CD8-positive, alpha-beta memory T cell (primary cell): ENCODE measurements at regions of chr6 and their contacts with region 1.

Region 1: GRCh38 chr6:159104163-159104925 is 59.6 kb upstream of the TAGAP start:
- DNase-seq: peak; percentile 64 to 86 (median 71)
- H3K4me3 ChIP-seq: peak overlapping the region; percentile 28
- H3K4me3 Mint-ChIP-seq: peak overlapping the region; percentile 33 to 82 (median 71)
- H3K27ac ChIP-seq: no peak overlapping the region
- H3K27ac Mint-ChIP-seq: peak overlapping the region; percentile 53 to 95 (median 90)
- H3K4me1 ChIP-seq: peaks cover 75% of the 10 kb centered on the region
- H3K4me1 Mint-ChIP-seq: peaks cover 67 to 92% (median 88%) of the 10 kb centered on the region in 3 donors
- H3K27me3 ChIP-seq: no peaks in the 10 kb centered on the region
- H3K27me3 Mint-ChIP-seq: no peaks in the 10 kb centered on the region

Region 2: GRCh38 chr6:158999666-159000403 is 104.5 kb before region 1 on chr6 and contains the start of gene RSPH3:
- CTCF ChIA-PET with region 1: interaction called, 248 read pairs
- POLR2A ChIA-PET with region 1: interaction called, 3 read pairs
- DNase-seq: peak; percentile 84 to 91 (median 84)
- H3K4me3 ChIP-seq: peak within 1 kb of the TSS; percentile 95
- H3K4me3 Mint-ChIP-seq: peak within 1 kb of the TSS; percentile 96 to 99 (median 98)
- H3K27ac ChIP-seq: peak within 1 kb of the TSS; percentile 86
- H3K27ac Mint-ChIP-seq: peak within 1 kb of the TSS; percentile 83 to 98 (median 94)
- H3K4me1 ChIP-seq: peaks cover 20% of the 10 kb centered on the region
- H3K4me1 Mint-ChIP-seq: peaks cover 30 to 47% (median 35%) of the 10 kb centered on the region in 3 donors
- H3K27me3 ChIP-seq: no peaks in the 10 kb centered on the region
- H3K27me3 Mint-ChIP-seq: no peaks in the 10 kb centered on the region
- total RNA-seq, gene RSPH3: 4.2 to 4.4 TPM

Region 3: GRCh38 chr6:159042003-159042825 is 62.1 kb before region 1 on chr6:
- CTCF ChIA-PET with region 1: interaction called, 288 read pairs
- POLR2A ChIA-PET with region 1: interaction called, 66 read pairs
- DNase-seq: peak; percentile 56 to 93 (median 86)
- H3K4me3 ChIP-seq: peak overlapping the region; percentile 89
- H3K4me3 Mint-ChIP-seq: peak overlapping the region; percentile 99 to 100 (median 100)
- H3K27ac ChIP-seq: peak overlapping the region; percentile 95
- H3K27ac Mint-ChIP-seq: peak overlapping the region; percentile 90 to 100 (median 98)
- H3K4me1 ChIP-seq: peaks cover 60% of the 10 kb centered on the region
- H3K4me1 Mint-ChIP-seq: peaks cover 60 to 72% (median 69%) of the 10 kb centered on the region in 3 donors
- H3K27me3 ChIP-seq: no peaks in the 10 kb centered on the region
- H3K27me3 Mint-ChIP-seq: peaks cover 0 to 3% of the 10 kb centered on the region in 2 donors

Region 4: DNA sequence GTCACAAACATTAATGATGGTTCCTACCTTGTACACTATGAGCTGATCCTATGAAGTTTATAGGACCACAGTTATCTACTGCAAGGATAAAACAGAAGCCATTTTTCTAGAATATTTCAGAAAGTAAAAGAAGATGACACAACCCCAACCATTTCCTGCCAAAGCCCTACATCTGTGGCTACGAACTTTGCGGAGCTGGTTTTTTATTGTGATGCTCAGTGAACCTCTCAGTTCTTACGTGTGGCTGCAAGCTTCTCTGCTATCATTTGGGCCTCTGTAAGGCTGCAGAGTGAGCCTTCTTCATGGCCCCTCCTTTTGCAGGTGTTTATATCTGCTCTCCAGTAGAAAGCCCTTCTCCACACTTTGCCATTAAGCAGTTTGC is 41.8 kb before region 1 on chr6:
- CTCF ChIA-PET with region 1: interaction called, 54 read pairs
- POLR2A ChIA-PET with region 1: interaction called, 6 read pairs
- DNase-seq: peak; percentile 25 to 83 (median 80)
- H3K4me3 ChIP-seq: peak overlapping the region; percentile 3
- H3K4me3 Mint-ChIP-seq: peak overlapping the region; percentile 43 to 89 (median 75)
- H3K27ac ChIP-seq: peak overlapping the region; percentile 70
- H3K27ac Mint-ChIP-seq: peak overlapping the region; percentile 94 to 99 (median 98)
- H3K4me1 ChIP-seq: peaks cover 69% of the 10 kb centered on the region
- H3K4me1 Mint-ChIP-seq: peaks cover 85 to 98% (median 97%) of the 10 kb centered on the region in 3 donors
- H3K27me3 ChIP-seq: no peaks in the 10 kb centered on the region
- H3K27me3 Mint-ChIP-seq: no peaks in the 10 kb centered on the region

Region 5: GRCh38 chr6:159090530-159091480 is 13.5 kb before region 1 on chr6:
- CTCF ChIA-PET with region 1: interaction called, 18 read pairs
- POLR2A ChIA-PET with region 1: interaction called, 3 read pairs
- DNase-seq: no peak
- H3K4me3 ChIP-seq: no peak overlapping the region
- H3K4me3 Mint-ChIP-seq: no peak overlapping the region
- H3K27ac ChIP-seq: no peak overlapping the region
- H3K27ac Mint-ChIP-seq: peak overlapping the region in 2 of 8 donors; percentile 2 to 59
- H3K4me1 ChIP-seq: peaks cover 21% of the 10 kb centered on the region
- H3K4me1 Mint-ChIP-seq: peaks cover 13 to 25% (median 22%) of the 10 kb centered on the region in 3 donors
- H3K27me3 ChIP-seq: no peaks in the 10 kb centered on the region
- H3K27me3 Mint-ChIP-seq: no peaks in the 10 kb centered on the region

Region 6: GRCh38 chr6:159134701-159135364 is 30.5 kb after region 1 on chr6:
- CTCF ChIA-PET with region 1: interaction called, 69 read pairs
- POLR2A ChIA-PET with region 1: no interaction called
- DNase-seq: peak; percentile 57 to 77 (median 67)
- H3K4me3 ChIP-seq: no peak overlapping the region
- H3K4me3 Mint-ChIP-seq: no peak overlapping the region
- H3K27ac ChIP-seq: no peak overlapping the region
- H3K27ac Mint-ChIP-seq: no peak overlapping the region
- H3K4me1 ChIP-seq: no peaks in the 10 kb centered on the region
- H3K4me1 Mint-ChIP-seq: peaks cover 0 to 8% (median 6%) of the 10 kb centered on the region in 3 donors
- H3K27me3 ChIP-seq: no peaks in the 10 kb centered on the region
- H3K27me3 Mint-ChIP-seq: peaks cover 15 to 21% of the 10 kb centered on the region in 2 donors

Region 7: DNA sequence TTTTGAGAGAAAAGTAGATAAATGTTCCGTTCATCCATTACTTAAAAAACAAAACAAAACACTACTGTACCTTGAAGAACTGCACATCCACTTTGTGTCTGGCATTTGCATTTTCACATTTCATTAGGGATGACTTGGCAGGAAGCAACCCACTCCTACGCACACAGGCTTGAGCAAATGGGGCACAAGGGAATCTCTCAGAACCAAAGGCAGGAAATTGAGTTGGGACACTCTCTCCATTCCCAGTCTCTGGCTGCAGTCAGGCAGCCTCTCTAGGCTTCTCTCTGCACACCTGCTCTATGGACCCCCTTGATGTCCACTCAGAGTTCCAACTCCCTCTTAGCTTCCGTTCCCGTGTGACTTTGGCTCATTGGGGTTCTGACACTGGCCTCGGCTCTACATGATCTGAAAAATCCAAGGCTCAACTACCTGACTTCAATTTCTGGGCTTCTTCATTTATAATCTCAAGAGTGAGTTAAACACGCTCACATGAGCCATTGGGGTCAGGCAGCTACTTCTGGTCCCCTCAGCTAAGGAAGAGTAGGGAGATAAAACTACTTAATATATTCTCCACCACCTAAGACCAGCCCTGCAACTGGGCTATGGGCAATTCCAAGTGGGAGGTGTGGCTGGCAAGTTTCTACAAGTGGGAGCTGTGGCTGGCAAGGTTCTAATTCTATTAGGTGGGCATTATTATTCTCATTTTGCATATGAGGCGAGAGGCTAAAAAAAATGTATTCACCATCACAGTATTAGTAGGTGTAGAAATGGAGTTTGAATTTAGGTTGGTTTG is 336.8 kb after region 1 on chr6:
- CTCF ChIA-PET with region 1: no interaction called
- POLR2A ChIA-PET with region 1: no interaction called
- DNase-seq: no peak
- H3K4me3 ChIP-seq: no peak overlapping the region
- H3K4me3 Mint-ChIP-seq: peak overlapping the region in 1 of 7 donors; percentile 37
- H3K27ac ChIP-seq: no peak overlapping the region
- H3K27ac Mint-ChIP-seq: no peak overlapping the region
- H3K4me1 ChIP-seq: no peaks in the 10 kb centered on the region
- H3K4me1 Mint-ChIP-seq: no peaks in the 10 kb centered on the region
- H3K27me3 ChIP-seq: no peaks in the 10 kb centered on the region
- H3K27me3 Mint-ChIP-seq: peaks cover 14 to 16% of the 10 kb centered on the region in 2 donors